Uterus (tissue), 4 donors: ENCODE measurements at regions of chr19 and their contacts with region 1.

Region 1: GRCh38 chr19:12974301-12975220 is 5.2 kb downstream of the DAND5 start:
- DNase-seq: no peak
- H3K4me3 ChIP-seq: no peak overlapping the region
- H3K27ac ChIP-seq: no peak overlapping the region
- H3K4me1 ChIP-seq: no peaks in the 10 kb centered on the region
- H3K27me3 ChIP-seq: no peaks in the 10 kb centered on the region
- CTCF ChIP-seq: no peak
- POLR2A ChIP-seq: no peak

Region 2: DNA sequence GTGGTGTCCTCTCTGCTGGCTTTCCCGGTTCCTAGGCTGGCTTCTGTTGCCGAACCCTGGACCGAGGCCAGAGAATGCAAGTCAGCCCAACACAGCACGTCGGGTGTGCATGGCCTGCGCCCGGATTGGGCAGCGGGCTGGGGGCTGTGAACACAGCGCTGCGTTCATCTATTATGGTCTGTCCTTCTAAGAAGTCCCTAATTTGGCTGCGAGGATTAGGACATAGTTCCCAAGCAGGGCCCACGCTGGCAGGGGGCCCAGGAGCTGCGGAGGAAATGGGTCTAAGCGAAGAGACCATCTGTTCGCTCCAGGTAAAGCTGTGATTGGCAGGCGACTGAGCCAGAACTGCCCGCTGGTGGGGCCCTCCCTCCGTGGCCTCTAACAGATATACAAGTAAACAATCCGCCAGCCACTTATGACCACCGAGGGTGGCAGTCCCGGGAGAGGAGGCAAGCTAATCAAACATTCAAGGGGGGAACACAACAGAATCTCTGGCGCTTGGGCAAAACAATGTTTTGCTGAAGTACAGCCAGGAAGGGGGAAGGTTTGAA is 61.5 kb before region 1 on chr19:
- intact Hi-C with region 1: no loop called
- DNase-seq: peak; percentile 61 to 63
- H3K4me3 ChIP-seq: peak overlapping the region in 1 of 2 donors; percentile 1
- H3K27ac ChIP-seq: peak overlapping the region; percentile 13 to 26
- H3K4me1 ChIP-seq: peaks cover 0 to 6% of the 10 kb centered on the region in 2 donors
- H3K27me3 ChIP-seq: no peaks in the 10 kb centered on the region
- CTCF ChIP-seq: no peak
- POLR2A ChIP-seq: no peak

Region 3: GRCh38 chr19:13060964-13061927 is 86.7 kb after region 1 on chr19:
- intact Hi-C with region 1: no loop called
- DNase-seq: peak; percentile 83 to 89
- H3K4me3 ChIP-seq: peak overlapping the region; percentile 33 to 35
- H3K27ac ChIP-seq: peak overlapping the region; percentile 98 to 100
- H3K4me1 ChIP-seq: peaks cover 34 to 61% of the 10 kb centered on the region in 2 donors
- H3K27me3 ChIP-seq: no peaks in the 10 kb centered on the region
- CTCF ChIP-seq: peak; percentile 94 to 99 (median 96)
- POLR2A ChIP-seq: peak in 1 of 2 donors; percentile 17

Region 4: DNA sequence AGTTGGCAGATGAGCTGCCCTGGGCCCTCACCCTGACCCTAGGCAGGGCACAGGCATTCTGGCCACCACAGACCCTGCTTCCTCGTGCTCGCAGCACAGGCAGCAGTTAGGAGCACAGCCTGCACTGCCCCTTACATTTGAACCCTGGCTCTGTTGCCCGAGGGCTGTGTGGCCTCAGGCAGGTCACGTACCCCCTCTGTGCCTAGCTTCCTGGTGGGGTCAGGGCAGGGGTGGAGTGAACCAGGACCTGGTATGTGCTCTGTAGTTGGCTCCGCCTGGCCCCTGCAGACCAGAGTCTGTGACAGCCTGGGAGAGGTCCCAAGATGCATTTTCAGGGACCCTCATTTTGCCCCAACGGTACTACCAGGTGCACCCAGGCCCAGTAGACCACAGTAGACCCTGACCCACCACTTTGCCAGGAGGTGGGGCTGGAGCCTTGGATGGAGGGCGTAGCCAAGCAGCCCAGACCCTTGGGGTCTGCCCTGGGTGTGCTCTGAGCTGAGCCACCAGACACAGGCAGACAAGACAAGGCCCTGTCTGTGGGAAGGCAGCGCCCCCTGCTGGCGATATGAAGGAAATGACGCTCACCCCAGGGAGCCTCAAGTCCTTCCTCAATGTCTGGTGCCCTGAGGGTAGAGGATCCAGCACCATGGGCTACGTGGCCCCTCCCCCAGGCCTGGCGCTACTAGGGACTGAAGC is 119.0 kb after region 1 on chr19:
- intact Hi-C with region 1: loop called (anchors 5 kb)
- DNase-seq: peak; percentile 85 to 91
- H3K4me3 ChIP-seq: no peak overlapping the region
- H3K27ac ChIP-seq: peak overlapping the region; percentile 87 to 93
- H3K4me1 ChIP-seq: peaks cover 24 to 50% of the 10 kb centered on the region in 2 donors
- H3K27me3 ChIP-seq: no peaks in the 10 kb centered on the region
- CTCF ChIP-seq: peak; percentile 96 to 98 (median 97)
- POLR2A ChIP-seq: peak in 1 of 2 donors; percentile 23

Region 5: GRCh38 chr19:13262450-13262849 is 287.9 kb after region 1 on chr19:
- intact Hi-C with region 1: loop called (anchors 5 kb)
- DNase-seq: peak in 1 of 2 donors; percentile 19
- H3K4me3 ChIP-seq: no peak overlapping the region
- H3K27ac ChIP-seq: no peak overlapping the region
- H3K4me1 ChIP-seq: no peaks in the 10 kb centered on the region
- H3K27me3 ChIP-seq: no peaks in the 10 kb centered on the region
- CTCF ChIP-seq: peak; percentile 50 to 75 (median 58)
- POLR2A ChIP-seq: no peak